ENCODE measurements at regions of chr6 and their contacts with region 1.

Region 1: GRCh38 chr6:42928986-42929820 is at the start of gene CNPY3:
- DNase-seq: peak; percentile 95 to 97 (median 96)
- H3K4me3 ChIP-seq: peak within 1 kb of the TSS; percentile 79 to 89
- H3K4me3 Mint-ChIP-seq: peak within 1 kb of the TSS; percentile 97 to 100 (median 98)
- H3K27ac ChIP-seq: peak within 1 kb of the TSS; percentile 86
- H3K27ac Mint-ChIP-seq: peak within 1 kb of the TSS; percentile 98 to 100 (median 99)
- H3K4me1 ChIP-seq: peaks cover 49% of the 10 kb centered on the region
- H3K4me1 Mint-ChIP-seq: peaks cover 29 to 59% (median 42%) of the 10 kb centered on the region in 4 donors
- H3K27me3 ChIP-seq: no peaks in the 10 kb centered on the region
- H3K27me3 Mint-ChIP-seq: no peaks in the 10 kb centered on the region
- total RNA-seq, gene CNPY3: 83.4 to 86.7 TPM

Region 2: GRCh38 chr6:41970436-41970846 is 958.8 kb before region 1 on chr6:
- CTCF ChIA-PET with region 1: no interaction called
- POLR2A ChIA-PET with region 1: no interaction called
- intact Hi-C with region 1: no loop called
- DNase-seq: peak in 1 of 5 donors; percentile 8
- H3K4me3 ChIP-seq: no peak overlapping the region
- H3K4me3 Mint-ChIP-seq: peak overlapping the region in 7 of 8 donors; percentile 17 to 70 (median 57)
- H3K27ac ChIP-seq: no peak overlapping the region
- H3K27ac Mint-ChIP-seq: peak overlapping the region; percentile 25 to 82 (median 59)
- H3K4me1 ChIP-seq: peaks cover 71% of the 10 kb centered on the region
- H3K4me1 Mint-ChIP-seq: peaks cover 42 to 85% (median 64%) of the 10 kb centered on the region in 4 donors
- H3K27me3 ChIP-seq: no peaks in the 10 kb centered on the region
- H3K27me3 Mint-ChIP-seq: no peaks in the 10 kb centered on the region

Region 3: DNA sequence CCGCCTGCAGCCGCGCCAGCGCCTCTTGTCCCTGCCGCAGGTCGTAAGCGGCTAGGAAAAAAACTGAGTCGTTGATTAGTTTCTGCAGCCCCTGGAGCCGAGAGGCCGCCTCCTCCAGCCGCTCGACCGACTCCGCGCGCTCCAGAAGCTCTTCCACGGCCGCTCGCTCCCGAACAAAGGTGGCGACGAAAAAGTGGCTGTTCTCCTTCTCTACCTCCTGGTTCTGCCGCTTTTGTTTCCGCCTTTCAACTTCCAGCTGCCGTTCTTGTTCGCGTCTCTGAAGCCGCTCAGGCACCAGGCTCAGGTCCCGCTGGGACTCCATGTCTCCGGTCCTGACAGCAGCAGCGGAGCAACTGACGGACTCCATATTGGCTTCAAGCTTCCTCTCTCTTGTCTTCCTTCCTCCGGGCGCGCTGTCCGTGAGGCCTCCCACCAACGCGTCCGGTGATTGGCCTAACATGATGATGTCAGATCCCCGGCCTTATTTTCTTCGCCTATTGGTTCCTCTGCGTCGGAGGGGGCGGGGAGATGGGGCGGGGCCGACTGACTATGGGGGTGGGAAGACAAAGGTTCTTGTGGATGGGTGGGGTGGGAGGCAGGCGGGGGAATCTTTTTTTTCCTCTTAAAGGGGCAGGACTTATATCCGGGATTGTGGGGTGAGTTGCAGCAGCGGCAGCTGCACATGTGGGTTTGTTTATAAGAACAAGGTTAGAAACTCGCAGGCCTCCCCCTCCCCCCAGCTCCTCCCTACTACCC is 183.3 kb before region 1 on chr6 and contains the start of gene TBCC:
- CTCF ChIA-PET with region 1: no interaction called
- POLR2A ChIA-PET with region 1: interaction called, 32 read pairs
- intact Hi-C with region 1: no loop called
- DNase-seq: peak; percentile 91 to 98 (median 94)
- H3K4me3 ChIP-seq: peak within 1 kb of the TSS; percentile 82 to 99
- H3K4me3 Mint-ChIP-seq: peak within 1 kb of the TSS; percentile 100
- H3K27ac ChIP-seq: peak within 1 kb of the TSS; percentile 88
- H3K27ac Mint-ChIP-seq: peak within 1 kb of the TSS; percentile 94 to 100 (median 100)
- H3K4me1 ChIP-seq: peaks cover 38% of the 10 kb centered on the region
- H3K4me1 Mint-ChIP-seq: peaks cover 18 to 50% (median 37%) of the 10 kb centered on the region in 4 donors
- H3K27me3 ChIP-seq: no peaks in the 10 kb centered on the region
- H3K27me3 Mint-ChIP-seq: no peaks in the 10 kb centered on the region
- total RNA-seq, gene TBCC: 57.4 to 64.4 TPM

Region 4: GRCh38 chr6:42819803-42820511 is 109.2 kb before region 1 on chr6:
- CTCF ChIA-PET with region 1: no interaction called
- POLR2A ChIA-PET with region 1: no interaction called
- intact Hi-C with region 1: no loop called
- DNase-seq: peak in 4 of 5 donors; percentile 17 to 24 (median 22)
- H3K4me3 ChIP-seq: no peak overlapping the region
- H3K4me3 Mint-ChIP-seq: peak overlapping the region in 2 of 8 donors; percentile 11 to 34
- H3K27ac ChIP-seq: no peak overlapping the region
- H3K27ac Mint-ChIP-seq: peak overlapping the region; percentile 35 to 79 (median 57)
- H3K4me1 ChIP-seq: peaks cover 15% of the 10 kb centered on the region
- H3K4me1 Mint-ChIP-seq: peaks cover 16 to 30% (median 25%) of the 10 kb centered on the region in 4 donors
- H3K27me3 ChIP-seq: no peaks in the 10 kb centered on the region
- H3K27me3 Mint-ChIP-seq: no peaks in the 10 kb centered on the region

Region 5: DNA sequence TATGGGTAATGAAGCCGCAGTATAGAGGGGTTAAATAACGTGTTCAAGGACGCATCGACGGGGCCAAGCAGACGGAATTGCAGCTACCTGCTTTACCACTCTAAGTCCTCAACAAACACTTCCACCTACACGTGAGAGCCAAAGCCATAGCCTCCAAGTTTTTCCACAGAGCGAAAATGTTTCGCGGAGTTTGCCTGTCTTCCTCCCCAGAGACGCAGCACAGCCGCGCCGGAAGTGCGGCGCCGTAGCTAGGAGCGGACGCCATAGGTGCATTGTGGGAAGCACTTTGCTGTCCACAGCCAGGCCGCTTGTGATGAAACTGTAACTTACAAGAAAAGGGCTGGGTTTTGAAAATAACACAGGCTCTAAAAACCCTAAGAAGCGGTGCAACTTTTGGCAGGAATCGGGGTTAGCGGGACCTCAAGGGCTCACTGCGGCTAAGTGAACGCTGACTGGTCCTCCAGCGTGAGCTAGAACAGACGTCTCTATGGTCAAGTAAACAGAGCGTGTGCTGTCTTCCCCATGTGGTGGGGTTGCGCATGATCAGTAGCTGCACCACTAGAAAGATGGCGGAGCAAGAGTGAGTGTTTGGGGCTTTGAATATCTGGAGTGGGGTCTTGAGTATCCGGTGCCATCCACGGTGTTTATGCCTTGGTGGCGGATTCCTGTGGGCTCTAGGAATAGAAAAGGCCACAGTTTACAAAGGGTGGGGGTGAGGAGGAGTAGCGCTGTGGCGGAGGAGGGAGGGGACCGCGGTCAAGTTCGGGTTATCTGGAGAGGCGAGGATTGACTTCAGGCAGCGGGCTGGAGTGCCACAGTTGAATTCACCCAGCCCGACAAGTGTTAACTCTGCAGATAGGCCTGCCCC is 49.6 kb before region 1 on chr6 and contains the start of gene RPL7L1:
- CTCF ChIA-PET with region 1: no interaction called
- POLR2A ChIA-PET with region 1: interaction called, 22 read pairs
- intact Hi-C with region 1: loop called (anchors 1 kb)
- DNase-seq: peak; percentile 88 to 93 (median 91)
- H3K4me3 ChIP-seq: peak within 1 kb of the TSS; percentile 77 to 84
- H3K4me3 Mint-ChIP-seq: peak within 1 kb of the TSS; percentile 94 to 99 (median 96)
- H3K27ac ChIP-seq: peak within 1 kb of the TSS; percentile 93
- H3K27ac Mint-ChIP-seq: peak within 1 kb of the TSS; percentile 97 to 100 (median 99)
- H3K4me1 ChIP-seq: peaks cover 23% of the 10 kb centered on the region
- H3K4me1 Mint-ChIP-seq: peaks cover 7 to 39% (median 25%) of the 10 kb centered on the region in 4 donors
- H3K27me3 ChIP-seq: no peaks in the 10 kb centered on the region
- H3K27me3 Mint-ChIP-seq: no peaks in the 10 kb centered on the region
- total RNA-seq, gene RPL7L1: 89.2 to 89.8 TPM

Region 6: GRCh38 chr6:42963855-42964605 is 34.8 kb after region 1 on chr6:
- CTCF ChIA-PET with region 1: interaction called, 4 read pairs
- POLR2A ChIA-PET with region 1: interaction called, 6 read pairs
- intact Hi-C with region 1: loop called (anchors 5 kb)
- DNase-seq: peak in 3 of 5 donors; percentile 28 to 42 (median 37)
- H3K4me3 ChIP-seq: no peak overlapping the region
- H3K4me3 Mint-ChIP-seq: no peak overlapping the region
- H3K27ac ChIP-seq: no peak overlapping the region
- H3K27ac Mint-ChIP-seq: no peak overlapping the region
- H3K4me1 ChIP-seq: peaks cover 11% of the 10 kb centered on the region
- H3K4me1 Mint-ChIP-seq: peaks cover 7 to 27% (median 11%) of the 10 kb centered on the region in 4 donors
- H3K27me3 ChIP-seq: no peaks in the 10 kb centered on the region
- H3K27me3 Mint-ChIP-seq: no peaks in the 10 kb centered on the region

Region 7: GRCh38 chr6:43013843-43014433 is 84.7 kb after region 1 on chr6 and contains the starts of genes KLHDC3 and MEA1:
- CTCF ChIA-PET with region 1: interaction called, 3 read pairs
- POLR2A ChIA-PET with region 1: interaction called, 50 read pairs
- intact Hi-C with region 1: loop called (anchors 1 kb)
- DNase-seq: peak; percentile 98 to 100 (median 100)
- H3K4me3 ChIP-seq: peak within 1 kb of the TSS; percentile 75 to 84
- H3K4me3 Mint-ChIP-seq: peak within 1 kb of the TSS; percentile 91 to 97 (median 94)
- H3K27ac ChIP-seq: peak within 1 kb of the TSS; percentile 71
- H3K27ac Mint-ChIP-seq: peak within 1 kb of the TSS; percentile 75 to 98 (median 94)
- H3K4me1 ChIP-seq: peaks cover 54% of the 10 kb centered on the region
- H3K4me1 Mint-ChIP-seq: peaks cover 39 to 71% (median 56%) of the 10 kb centered on the region in 4 donors
- H3K27me3 ChIP-seq: no peaks in the 10 kb centered on the region
- H3K27me3 Mint-ChIP-seq: no peaks in the 10 kb centered on the region
- total RNA-seq, gene KLHDC3: 66.6 to 67.9 TPM
- total RNA-seq, gene MEA1: 36.2 to 36.3 TPM

Region 8: GRCh38 chr6:43059168-43060033 is 130.2 kb after region 1 on chr6 and contains the starts of genes KLC4 and MRPL2:
- CTCF ChIA-PET with region 1: no interaction called
- POLR2A ChIA-PET with region 1: interaction called, 42 read pairs
- intact Hi-C with region 1: loop called (anchors 1 kb)
- DNase-seq: peak; percentile 95 to 99 (median 96)
- H3K4me3 ChIP-seq: peak within 1 kb of the TSS; percentile 84 to 87
- H3K4me3 Mint-ChIP-seq: peak within 1 kb of the TSS; percentile 94 to 99 (median 97)
- H3K27ac ChIP-seq: peak within 1 kb of the TSS; percentile 91
- H3K27ac Mint-ChIP-seq: peak within 1 kb of the TSS; percentile 97 to 100 (median 99)
- H3K4me1 ChIP-seq: peaks cover 24% of the 10 kb centered on the region
- H3K4me1 Mint-ChIP-seq: peaks cover 27 to 52% (median 35%) of the 10 kb centered on the region in 4 donors
- H3K27me3 ChIP-seq: no peaks in the 10 kb centered on the region
- H3K27me3 Mint-ChIP-seq: no peaks in the 10 kb centered on the region
- total RNA-seq, gene KLC4: 51.6 to 57.0 TPM
- total RNA-seq, gene MRPL2: 55.3 to 56.5 TPM

Region 9: GRCh38 chr6:43096451-43097097 is 167.4 kb after region 1 on chr6:
- CTCF ChIA-PET with region 1: no interaction called
- POLR2A ChIA-PET with region 1: no interaction called
- intact Hi-C with region 1: no loop called
- DNase-seq: no peak
- H3K4me3 ChIP-seq: no peak overlapping the region
- H3K4me3 Mint-ChIP-seq: no peak overlapping the region
- H3K27ac ChIP-seq: no peak overlapping the region
- H3K27ac Mint-ChIP-seq: no peak overlapping the region
- H3K4me1 ChIP-seq: peaks cover 15% of the 10 kb centered on the region
- H3K4me1 Mint-ChIP-seq: peaks cover 12 to 22% (median 15%) of the 10 kb centered on the region in 4 donors
- H3K27me3 ChIP-seq: no peaks in the 10 kb centered on the region
- H3K27me3 Mint-ChIP-seq: no peaks in the 10 kb centered on the region

Region 10: DNA sequence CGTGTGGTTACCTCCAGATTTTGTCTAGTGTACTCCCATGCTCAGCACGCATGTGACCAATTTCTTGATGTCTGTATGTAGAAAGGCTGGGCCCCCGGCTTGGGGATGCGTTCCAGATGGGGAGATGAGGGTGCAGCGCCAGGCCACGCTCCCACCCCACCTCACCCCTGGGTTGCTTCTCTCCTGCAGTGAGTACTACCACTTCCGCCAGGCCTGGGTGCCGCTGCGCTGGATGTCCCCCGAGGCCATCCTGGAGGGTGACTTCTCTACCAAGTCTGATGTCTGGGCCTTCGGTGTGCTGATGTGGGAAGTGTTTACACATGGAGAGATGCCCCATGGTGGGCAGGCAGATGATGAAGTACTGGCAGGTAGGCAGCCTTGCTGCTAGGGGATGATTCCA is 230.4 kb after region 1 on chr6:
- CTCF ChIA-PET with region 1: no interaction called
- POLR2A ChIA-PET with region 1: no interaction called
- intact Hi-C with region 1: no loop called
- DNase-seq: no peak
- H3K4me3 ChIP-seq: no peak overlapping the region
- H3K4me3 Mint-ChIP-seq: no peak overlapping the region
- H3K27ac ChIP-seq: no peak overlapping the region
- H3K27ac Mint-ChIP-seq: no peak overlapping the region
- H3K4me1 ChIP-seq: no peaks in the 10 kb centered on the region
- H3K4me1 Mint-ChIP-seq: peaks cover 0 to under 1% (median 0%) of the 10 kb centered on the region in 4 donors
- H3K27me3 ChIP-seq: no peaks in the 10 kb centered on the region
- H3K27me3 Mint-ChIP-seq: no peaks in the 10 kb centered on the region

Region 11: GRCh38 chr6:43427406-43428111 is 498.4 kb after region 1 on chr6 and contains the start of gene ABCC10:
- CTCF ChIA-PET with region 1: no interaction called
- POLR2A ChIA-PET with region 1: interaction called, 8 read pairs
- intact Hi-C with region 1: loop called (anchors 2 kb)
- DNase-seq: peak; percentile 93 to 97 (median 95)
- H3K4me3 ChIP-seq: peak within 1 kb of the TSS; percentile 70 to 95
- H3K4me3 Mint-ChIP-seq: peak within 1 kb of the TSS; percentile 92 to 98 (median 96)
- H3K27ac ChIP-seq: peak within 1 kb of the TSS; percentile 79
- H3K27ac Mint-ChIP-seq: peak within 1 kb of the TSS; percentile 88 to 99 (median 98)
- H3K4me1 ChIP-seq: peaks cover 30% of the 10 kb centered on the region
- H3K4me1 Mint-ChIP-seq: peaks cover 20 to 28% (median 24%) of the 10 kb centered on the region in 4 donors
- H3K27me3 ChIP-seq: no peaks in the 10 kb centered on the region
- H3K27me3 Mint-ChIP-seq: no peaks in the 10 kb centered on the region
- total RNA-seq, gene ABCC10: 69.9 to 80.0 TPM